ENCODE measurements at regions of chr10 and their contacts with region 1.

Region 1: GRCh38 chr10:73246783-73247508 is at the start of gene DNAJC9:
- H3K4me3 ChIP-seq: peak within 1 kb of the TSS; percentile 91
- H3K27ac ChIP-seq: peak within 1 kb of the TSS; percentile 96
- H3K4me1 ChIP-seq: peaks cover 2% of the 10 kb centered on the region; the same call in 1 of the 2 replicates
- CTCF ChIP-seq: peak; percentile 62; the same call in 1 of the 2 replicates

Region 2: DNA sequence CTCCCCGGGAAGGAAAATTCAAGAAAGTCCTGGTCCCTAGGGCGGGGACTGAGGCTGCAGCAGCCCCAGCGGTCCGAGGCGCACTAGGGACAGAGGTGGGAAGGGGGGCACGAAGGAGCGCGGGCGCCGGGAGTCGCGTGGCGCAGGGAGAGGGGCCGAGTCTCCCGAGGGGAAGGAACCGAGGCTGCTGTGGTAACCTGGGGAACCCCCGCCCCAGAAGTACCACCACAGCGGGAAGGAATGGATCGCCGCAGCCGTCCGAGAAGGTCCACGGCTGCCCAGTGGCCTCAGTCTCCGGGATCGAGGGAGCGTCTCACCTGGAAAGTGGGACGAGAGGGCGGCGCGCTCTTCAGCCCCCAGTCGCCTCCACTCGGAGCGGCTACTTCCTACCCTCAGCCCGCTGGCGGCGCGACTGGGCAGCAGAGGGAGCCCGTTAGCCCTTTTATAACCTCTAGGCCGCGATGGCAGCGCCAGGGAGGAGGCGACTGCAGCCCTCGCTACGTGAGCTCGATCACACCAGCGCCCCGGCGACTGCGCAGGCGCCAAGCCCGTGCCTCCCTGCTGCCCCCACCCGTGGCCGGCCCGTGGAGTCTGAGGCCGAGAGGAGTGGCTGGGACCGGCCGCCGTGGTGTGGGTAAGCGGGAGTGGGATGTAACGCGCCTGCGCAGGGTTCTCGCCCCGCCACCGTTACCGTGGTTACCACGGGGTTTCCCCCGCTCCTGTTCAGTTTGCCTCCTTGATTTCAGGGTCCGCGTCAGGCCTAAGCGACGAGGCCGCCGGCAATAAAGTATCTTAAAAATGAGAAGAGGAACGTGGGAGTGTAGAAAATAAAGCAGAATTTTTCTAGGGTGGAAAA is 150.3 kb before region 1 on chr10 and contains the start of gene P4HA1:
- CTCF ChIA-PET with region 1: interaction called, 3 read pairs
- POLR2A ChIA-PET with region 1: interaction called, 10 read pairs
- H3K4me3 ChIP-seq: peak within 1 kb of the TSS; percentile 82
- H3K27ac ChIP-seq: peak within 1 kb of the TSS; percentile 90
- H3K4me1 ChIP-seq: no peaks in the 10 kb centered on the region; the same call in 1 of the 2 replicates
- CTCF ChIP-seq: peak; percentile 99

Region 3: GRCh38 chr10:73167783-73168464 is 79.0 kb before region 1 on chr10 and contains the starts of genes ECD and FAM149B1:
- CTCF ChIA-PET with region 1: interaction called, 3 read pairs
- POLR2A ChIA-PET with region 1: interaction called, 21 read pairs
- H3K4me3 ChIP-seq: peak within 1 kb of the TSS; percentile 60
- H3K27ac ChIP-seq: peak within 1 kb of the TSS; percentile 56
- H3K4me1 ChIP-seq: no peaks in the 10 kb centered on the region
- CTCF ChIP-seq: peak; percentile 73; the same call in 1 of the 2 replicates

Region 4: GRCh38 chr10:73232887-73233286 is 14.1 kb before region 1 on chr10:
- CTCF ChIA-PET with region 1: interaction called, 3 read pairs
- POLR2A ChIA-PET with region 1: interaction called, 23 read pairs
- H3K4me3 ChIP-seq: no peak overlapping the region
- H3K27ac ChIP-seq: no peak overlapping the region
- H3K4me1 ChIP-seq: no peaks in the 10 kb centered on the region
- CTCF ChIP-seq: no peak

Region 5: DNA sequence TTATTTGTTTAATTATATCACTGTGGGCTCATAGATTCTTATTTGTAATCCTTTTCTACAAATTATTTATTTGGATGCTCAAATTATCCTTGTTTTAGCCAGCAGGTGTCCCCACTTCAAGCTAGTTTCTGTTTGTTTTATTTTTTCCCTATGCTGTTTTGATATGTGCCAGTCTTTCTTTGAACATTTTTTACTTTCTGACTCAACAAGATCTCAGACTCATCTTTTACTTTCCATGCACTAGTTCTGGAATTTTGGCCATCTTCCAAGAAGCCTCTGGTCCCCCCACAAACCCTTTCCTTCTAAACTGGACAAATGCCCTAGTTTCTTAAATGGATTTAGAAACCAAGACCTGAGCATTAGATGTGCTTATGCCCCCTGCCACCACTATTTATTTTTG is 17.0 kb after region 1 on chr10:
- CTCF ChIA-PET with region 1: interaction called, 21 read pairs
- POLR2A ChIA-PET with region 1: interaction called, 10 read pairs
- H3K4me3 ChIP-seq: no peak overlapping the region
- H3K27ac ChIP-seq: no peak overlapping the region
- H3K4me1 ChIP-seq: no peaks in the 10 kb centered on the region
- CTCF ChIP-seq: no peak

Region 6: GRCh38 chr10:73296946-73297345 is 50.0 kb after region 1 on chr10:
- CTCF ChIA-PET with region 1: no interaction called
- POLR2A ChIA-PET with region 1: no interaction called
- H3K4me3 ChIP-seq: no peak overlapping the region
- H3K27ac ChIP-seq: no peak overlapping the region
- H3K4me1 ChIP-seq: no peaks in the 10 kb centered on the region
- CTCF ChIP-seq: no peak

Region 7: GRCh38 chr10:73358331-73359279 is 111.7 kb after region 1 on chr10 and contains the start of gene CFAP70:
- CTCF ChIA-PET with region 1: no interaction called
- POLR2A ChIA-PET with region 1: interaction called, 18 read pairs
- H3K4me3 ChIP-seq: peak within 1 kb of the TSS; percentile 80
- H3K27ac ChIP-seq: peak within 1 kb of the TSS; percentile 42; the same call in 1 of the 2 replicates
- H3K4me1 ChIP-seq: 0 out of 2 replicates have a peak, but pooled peaks cover 3% of the 10 kb centered on the region
- CTCF ChIP-seq: no peak

Region 8: DNA sequence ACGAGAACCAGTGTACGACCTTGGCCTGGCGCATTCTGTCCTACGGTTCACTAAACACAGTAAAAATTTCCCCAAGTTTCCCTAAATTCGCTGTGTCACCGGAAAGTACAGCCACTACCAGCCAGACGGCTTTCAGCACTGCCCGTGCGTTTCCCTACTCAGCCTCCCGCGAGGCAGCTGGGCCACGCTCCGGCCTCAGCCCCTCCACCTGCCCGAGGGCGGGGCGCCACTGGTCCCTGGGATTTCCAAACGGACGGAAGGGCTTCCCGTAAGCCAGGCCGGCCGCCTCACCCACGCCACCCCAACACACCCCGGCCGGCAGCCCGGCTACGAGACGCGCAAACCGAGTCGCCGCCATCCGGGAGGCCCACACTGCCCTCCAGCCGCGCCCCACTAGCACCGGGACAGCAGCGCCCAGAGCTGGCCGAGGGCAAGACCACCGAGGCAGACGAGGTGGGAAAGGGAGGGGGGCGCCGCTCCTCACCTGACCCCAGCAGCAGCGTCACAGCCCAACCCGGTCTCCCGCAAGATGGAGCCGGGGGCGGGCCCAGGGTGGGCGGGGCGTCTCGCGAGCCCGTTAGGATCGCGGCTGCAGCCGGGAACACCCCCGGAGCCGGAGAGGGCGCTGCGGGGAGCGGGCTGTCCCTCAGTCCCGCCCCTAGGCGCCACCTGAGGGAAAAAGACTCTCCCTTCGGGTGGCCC is 166.7 kb after region 1 on chr10 and contains the start of gene ANXA7:
- CTCF ChIA-PET with region 1: no interaction called
- POLR2A ChIA-PET with region 1: interaction called, 22 read pairs
- H3K4me3 ChIP-seq: peak within 1 kb of the TSS; percentile 99
- H3K27ac ChIP-seq: peak within 1 kb of the TSS; percentile 83
- H3K4me1 ChIP-seq: no peaks in the 10 kb centered on the region
- CTCF ChIP-seq: peak; percentile 83